Activated T-helper 1 cell treated with anti-CD3 and anti-CD28 coated beads, Interleukin-12 subunit alpha, Interleukin-12 subunit beta, Interleukin-2, Interleukin-4 antibody, amounts not matched to agents 30 ng/mL and 10 ng/mL and 1 ng/mL, durations not matched to agents 14 hours and 24 hours and 36 hours (primary cell): ENCODE measurements at regions of chr7 and their contacts with region 1.

Region 1: DNA sequence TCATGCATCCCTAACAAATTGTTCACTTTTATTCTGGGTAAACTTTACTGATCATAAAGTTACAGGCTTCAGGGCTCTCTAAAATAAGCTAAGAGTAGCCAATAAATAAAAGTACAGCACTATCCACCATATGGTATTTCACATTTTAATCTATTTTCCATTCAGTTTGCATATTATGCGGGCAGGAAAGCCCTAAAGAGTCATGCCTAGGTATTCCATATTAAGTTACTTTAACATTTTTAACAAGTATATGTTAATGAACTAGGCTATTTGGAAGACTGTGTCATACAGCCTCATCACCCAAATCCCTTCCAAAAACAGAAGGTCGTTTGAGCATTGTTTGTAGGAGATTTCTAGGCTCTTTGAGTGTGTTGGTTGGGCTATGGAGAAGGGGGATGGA is 106.3 kb downstream of the CPED1 start:
- DNase-seq: no peak
- H3K4me3 Mint-ChIP-seq: no peak overlapping the region
- H3K27ac Mint-ChIP-seq: no peak overlapping the region
- H3K4me1 Mint-ChIP-seq: no peaks in the 10 kb centered on the region
- H3K27me3 Mint-ChIP-seq: peaks cover 5% of the 10 kb centered on the region

Region 2: DNA sequence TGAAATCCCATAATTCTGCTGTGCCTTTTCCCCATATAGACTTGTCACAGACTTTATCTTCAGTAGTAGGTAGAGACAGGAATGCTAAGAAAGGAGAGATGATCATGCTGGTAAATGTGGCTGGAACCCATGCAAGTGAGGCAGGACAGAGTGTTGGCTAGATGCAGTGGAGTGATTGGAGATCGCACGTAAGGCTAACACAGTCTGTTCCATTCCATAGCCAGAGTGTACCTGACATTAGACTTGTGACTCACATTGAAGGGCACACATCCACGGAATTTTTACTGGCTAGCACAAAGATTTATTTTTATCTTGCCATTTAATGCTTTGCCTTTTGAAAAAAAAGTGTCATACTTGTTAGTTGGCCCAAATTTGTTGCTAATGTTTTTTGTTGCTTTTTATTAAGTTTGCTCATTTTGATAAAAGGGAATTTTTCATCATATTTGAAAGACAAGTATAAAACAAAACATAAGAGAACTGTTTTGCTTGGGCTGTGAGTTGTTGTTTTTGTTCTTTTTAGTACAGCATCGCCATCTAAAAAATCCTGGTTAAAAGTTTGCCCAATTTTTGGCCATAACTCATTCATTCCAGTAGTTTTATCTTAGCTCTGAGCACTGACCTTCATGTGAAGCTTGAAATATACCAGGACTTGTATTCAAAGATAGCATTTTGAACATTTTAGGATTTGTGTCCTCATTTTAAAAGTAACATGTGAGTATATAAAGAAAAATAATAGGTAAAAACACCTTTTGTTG is 25.3 kb before region 1 on chr7:
- intact Hi-C with region 1: loop called (anchors 1 kb)
- DNase-seq: no peak
- H3K4me3 Mint-ChIP-seq: no peak overlapping the region
- H3K27ac Mint-ChIP-seq: no peak overlapping the region
- H3K4me1 Mint-ChIP-seq: no peaks in the 10 kb centered on the region
- H3K27me3 Mint-ChIP-seq: peaks cover 7% of the 10 kb centered on the region

Region 3: GRCh38 chr7:121138262-121138933 is 43.6 kb after region 1 on chr7:
- intact Hi-C with region 1: no loop called
- DNase-seq: no peak
- H3K4me3 Mint-ChIP-seq: peak overlapping the region; percentile 10
- H3K27ac Mint-ChIP-seq: no peak overlapping the region
- H3K4me1 Mint-ChIP-seq: peaks cover 11% of the 10 kb centered on the region
- H3K27me3 Mint-ChIP-seq: peaks cover 8% of the 10 kb centered on the region

Region 4: DNA sequence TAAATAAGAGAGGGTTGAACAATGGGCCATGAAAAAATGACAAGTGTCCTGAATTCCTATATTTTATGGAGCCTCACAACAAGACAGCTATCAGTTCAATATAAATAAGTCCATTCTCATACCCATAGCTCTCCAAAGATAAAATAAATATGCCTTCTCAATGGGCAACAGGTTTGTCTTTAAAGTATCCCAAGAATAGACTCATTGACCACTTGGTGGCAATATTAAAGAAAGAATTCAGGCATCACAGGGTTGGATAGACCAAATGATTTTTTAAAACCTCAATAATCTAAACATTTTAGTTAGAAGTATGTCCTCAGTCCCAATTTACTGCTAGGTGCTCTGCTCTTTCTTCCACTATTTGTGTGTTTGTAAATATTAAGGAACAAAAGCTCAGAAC is 68.9 kb after region 1 on chr7:
- intact Hi-C with region 1: no loop called
- DNase-seq: no peak
- H3K4me3 Mint-ChIP-seq: no peak overlapping the region
- H3K27ac Mint-ChIP-seq: no peak overlapping the region
- H3K4me1 Mint-ChIP-seq: no peaks in the 10 kb centered on the region
- H3K27me3 Mint-ChIP-seq: peaks cover 19% of the 10 kb centered on the region